Tibial artery (tissue), 4 donors: ENCODE measurements at regions of chr1 and their contacts with region 1.

Region 1: GRCh38 chr1:94522304-94522703 is 19.3 kb downstream of the F3 start:
- DNase-seq: no peak
- H3K4me3 ChIP-seq: no peak overlapping the region
- H3K27ac ChIP-seq: no peak overlapping the region
- H3K4me1 ChIP-seq: no peaks in the 10 kb centered on the region
- H3K27me3 ChIP-seq: no peaks in the 10 kb centered on the region
- CTCF ChIP-seq: peak; percentile 53 to 58

Region 2: GRCh38 chr1:94801919-94802546 is 279.7 kb after region 1 on chr1:
- intact Hi-C with region 1: loop called (anchors 5 kb)
- DNase-seq: peak in 1 of 2 donors; percentile 29
- H3K4me3 ChIP-seq: peak overlapping the region; percentile 15 to 39
- H3K27ac ChIP-seq: peak overlapping the region; percentile 50 to 57
- H3K4me1 ChIP-seq: peaks cover 0 to 24% (median 8%) of the 10 kb centered on the region in 4 donors
- H3K27me3 ChIP-seq: no peaks in the 10 kb centered on the region
- CTCF ChIP-seq: peak; percentile 42 to 49

Region 3: DNA sequence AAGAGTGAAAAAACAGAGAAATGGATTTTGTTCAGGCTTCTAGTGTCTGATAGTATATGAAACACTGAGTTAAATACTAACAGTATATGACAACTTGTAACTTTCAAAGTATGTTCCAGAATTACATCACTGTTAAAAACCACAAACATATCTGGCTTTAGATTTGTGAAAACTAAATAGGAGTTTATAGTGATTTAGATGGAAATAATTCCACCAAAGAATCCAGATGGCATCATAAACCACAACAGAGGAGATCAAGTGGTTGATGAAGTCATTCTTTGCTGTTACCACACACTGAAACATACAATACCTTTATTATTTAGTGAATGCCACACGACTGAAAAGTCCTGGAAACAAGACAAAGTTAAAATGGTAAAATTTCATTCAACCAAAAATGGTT is 513.2 kb after region 1 on chr1:
- intact Hi-C with region 1: loop called (anchors 10 kb)
- DNase-seq: no peak
- H3K4me3 ChIP-seq: no peak overlapping the region
- H3K27ac ChIP-seq: no peak overlapping the region
- H3K4me1 ChIP-seq: no peaks in the 10 kb centered on the region
- H3K27me3 ChIP-seq: no peaks in the 10 kb centered on the region
- CTCF ChIP-seq: no peak